Heart left ventricle (tissue), 16 donors: ENCODE measurements at regions of chr7 and their contacts with region 1.

Region 1: DNA sequence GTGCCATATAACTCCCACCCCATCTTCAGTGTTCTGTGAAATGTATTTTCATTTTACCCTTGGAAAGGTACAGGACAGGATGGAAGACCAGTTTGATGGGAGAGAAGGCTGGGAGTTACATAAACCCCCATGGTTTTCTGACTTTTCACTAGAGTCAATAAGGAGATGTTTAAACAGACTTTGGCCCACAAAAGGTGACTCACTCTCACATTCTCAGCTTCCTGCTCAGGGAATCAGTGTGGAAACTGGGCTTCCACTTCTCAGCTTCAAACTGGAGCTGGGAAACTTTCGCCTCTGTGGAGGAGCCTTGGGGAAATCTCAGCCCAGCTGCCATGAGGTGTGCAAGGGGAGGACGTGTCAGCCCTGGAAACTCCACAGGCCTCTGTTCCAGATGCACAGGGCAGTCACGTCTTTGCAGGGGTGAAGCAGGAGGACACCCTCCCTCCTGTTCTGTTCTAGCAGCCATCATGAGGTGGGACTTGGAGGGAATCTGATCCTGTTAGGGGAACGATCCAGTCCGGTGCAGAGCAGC is 560.5 kb upstream of the GALNT17 start:
- DNase-seq: no peak
- ATAC-seq: no peak
- H3K4me3 ChIP-seq: no peak overlapping the region
- H3K27ac ChIP-seq: no peak overlapping the region
- H3K4me1 ChIP-seq: peaks cover 0 to 16% (median 6%) of the 10 kb centered on the region in 12 donors
- H3K27me3 ChIP-seq: no peaks in the 10 kb centered on the region
- CTCF ChIP-seq: no peak
- POLR2A ChIP-seq: no peak

Region 2: DNA sequence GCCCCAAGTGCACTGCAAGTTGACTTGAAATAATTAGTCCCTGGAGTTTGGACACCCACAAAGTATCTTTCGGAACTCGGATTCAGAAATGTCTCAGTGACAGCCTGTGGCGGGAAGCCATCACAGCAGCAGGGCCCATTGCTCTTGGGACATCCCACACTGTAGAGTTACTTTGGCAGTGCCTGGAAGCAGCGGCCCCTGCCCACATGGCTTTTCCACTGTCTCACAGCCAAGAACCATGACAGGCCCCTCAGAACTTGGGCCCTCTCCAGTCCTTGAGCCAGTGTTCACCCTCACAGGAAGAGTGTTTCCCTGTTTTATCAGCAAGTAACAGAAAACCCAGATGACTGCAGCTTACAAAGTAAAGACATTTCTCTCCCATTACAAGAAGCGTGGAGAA is 83.5 kb after region 1 on chr7:
- intact Hi-C with region 1: loop called in 1 of 10 experiments (anchors 10 kb)
- DNase-seq: peak; percentile 51 to 74 (median 63)
- ATAC-seq: peak; percentile 86 to 92 (median 88)
- H3K4me3 ChIP-seq: no peak overlapping the region
- H3K27ac ChIP-seq: peak overlapping the region in 2 of 12 donors; percentile 14 to 36
- H3K4me1 ChIP-seq: peaks cover 0 to 27% (median 9%) of the 10 kb centered on the region in 12 donors
- H3K27me3 ChIP-seq: no peaks in the 10 kb centered on the region
- CTCF ChIP-seq: no peak
- POLR2A ChIP-seq: no peak

Region 3: DNA sequence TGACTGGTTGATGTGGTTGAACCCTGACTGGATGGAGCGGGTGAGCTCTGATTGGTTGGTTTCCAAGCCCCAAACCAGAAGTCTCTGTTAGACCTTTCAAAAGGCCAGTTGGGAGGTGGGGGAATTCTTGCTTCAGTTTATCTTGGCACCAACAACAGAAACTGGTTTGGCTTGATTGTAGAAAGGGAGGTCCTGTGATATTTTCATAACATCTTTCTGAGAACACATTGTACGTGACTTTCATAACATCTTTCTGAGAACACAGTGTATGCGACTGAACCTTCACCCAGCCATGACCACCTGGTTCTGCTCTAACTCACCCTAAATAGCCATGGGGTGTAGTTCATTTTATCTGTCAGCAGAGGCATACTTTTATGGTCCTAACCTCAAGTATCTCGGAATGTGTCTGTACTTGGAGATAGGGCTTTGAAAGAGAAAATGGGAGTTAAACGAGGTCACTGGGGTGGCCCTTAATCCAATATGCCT is 648.8 kb after region 1 on chr7:
- intact Hi-C with region 1: no loop called
- DNase-seq: peak in 2 of 5 donors; percentile 34 to 54
- ATAC-seq: peak; percentile 93 to 97 (median 96)
- H3K4me3 ChIP-seq: no peak overlapping the region
- H3K27ac ChIP-seq: peak overlapping the region in 11 of 12 donors; percentile 44 to 88 (median 78)
- H3K4me1 ChIP-seq: peaks cover 0 to 5% (median 0%) of the 10 kb centered on the region in 12 donors
- H3K27me3 ChIP-seq: no peaks in the 10 kb centered on the region
- CTCF ChIP-seq: peak in 4 of 12 donors; percentile 10 to 26 (median 20)
- POLR2A ChIP-seq: no peak

Region 4: DNA sequence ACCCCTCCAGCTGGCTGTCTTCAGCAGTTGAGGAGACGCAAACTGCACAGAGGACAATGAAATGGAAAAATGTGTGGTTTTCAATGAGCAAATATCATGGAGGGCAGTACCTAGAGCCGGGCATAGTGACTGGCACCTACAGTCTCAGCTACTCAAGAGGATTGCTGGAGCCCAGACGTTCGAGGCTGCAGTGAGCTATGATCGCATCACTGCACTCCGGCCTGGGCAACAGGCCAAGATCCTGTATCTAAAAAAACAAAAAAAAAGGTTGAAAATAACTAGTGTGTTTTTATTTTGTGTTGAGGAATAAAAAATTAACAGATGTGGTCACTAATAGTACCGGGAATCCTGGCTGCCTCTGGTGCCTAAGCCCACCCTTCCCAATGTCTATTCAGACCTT is 906.0 kb after region 1 on chr7:
- intact Hi-C with region 1: no loop called
- DNase-seq: no peak
- ATAC-seq: no peak
- H3K4me3 ChIP-seq: no peak overlapping the region
- H3K27ac ChIP-seq: no peak overlapping the region
- H3K4me1 ChIP-seq: peaks cover 0 to 4% (median 0%) of the 10 kb centered on the region in 12 donors
- H3K27me3 ChIP-seq: no peaks in the 10 kb centered on the region
- CTCF ChIP-seq: no peak
- POLR2A ChIP-seq: no peak